ENCODE measurements at regions of chr12 and their contacts with region 1.

Region 1: GRCh38 chr12:124680863-124681778 is 113.7 kb upstream of the NCOR2 start:
- DNase-seq: no peak
- H3K4me3 ChIP-seq: no peak overlapping the region
- H3K27ac ChIP-seq: peak overlapping the region; percentile 85
- H3K4me1 ChIP-seq: peaks cover 20 to 23% of the 10 kb centered on the region in 2 donors
- H3K27me3 ChIP-seq: no peaks in the 10 kb centered on the region
- CTCF ChIP-seq: peak in 1 of 3 donors; percentile 16
- POLR2A ChIP-seq: no peak

Region 2: DNA sequence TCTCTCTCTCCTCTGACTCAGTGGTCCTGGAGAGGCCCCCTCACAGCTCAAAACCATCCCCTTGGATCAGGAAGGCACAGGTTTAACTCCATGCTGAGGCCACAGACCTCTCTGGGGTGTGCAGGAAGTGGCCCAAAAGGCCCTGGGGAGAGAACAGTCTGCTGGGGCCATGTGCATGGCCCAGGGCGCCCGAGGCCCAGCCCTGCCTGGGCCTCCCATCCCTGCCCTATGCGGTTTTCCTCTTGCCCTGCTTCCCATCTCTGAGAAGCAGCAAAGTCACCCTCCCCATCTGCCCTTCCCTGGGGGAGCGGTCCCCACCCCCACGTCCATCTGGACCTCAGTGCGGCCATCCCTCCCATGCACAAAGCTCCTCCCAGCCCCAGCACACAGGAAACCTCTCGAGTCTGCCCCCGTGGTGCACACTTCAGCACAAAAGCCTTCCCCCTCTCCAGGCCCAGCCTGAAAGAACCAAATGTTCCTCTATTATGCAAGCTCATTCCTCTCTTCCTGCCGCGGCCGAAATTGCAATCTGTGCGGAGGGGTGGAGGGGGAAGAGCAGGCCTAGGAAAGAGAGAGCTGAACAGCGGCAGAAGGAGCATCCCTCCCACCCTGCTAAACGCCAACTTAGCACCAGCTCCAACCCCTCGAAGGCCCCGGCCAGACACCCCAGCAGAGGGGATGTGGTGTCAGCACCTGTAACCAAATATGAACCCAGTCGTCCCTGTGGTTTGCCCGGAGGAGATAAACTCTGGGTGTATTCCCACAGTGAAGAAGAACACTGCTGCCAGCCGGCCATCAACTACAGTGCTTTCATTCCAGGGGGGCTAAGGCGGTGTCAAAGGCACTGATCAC is 74.1 kb after region 1 on chr12:
- intact Hi-C with region 1: loop called (anchors 10 kb)
- DNase-seq: peak; percentile 60 to 89
- H3K4me3 ChIP-seq: peak overlapping the region in 1 of 3 donors; percentile 26
- H3K27ac ChIP-seq: peak overlapping the region; percentile 87 to 94
- H3K4me1 ChIP-seq: peaks cover 9 to 17% of the 10 kb centered on the region in 2 donors
- H3K27me3 ChIP-seq: no peaks in the 10 kb centered on the region
- CTCF ChIP-seq: no peak
- POLR2A ChIP-seq: no peak